Activated CD8-positive, alpha-beta T cell treated with anti-CD3 and anti-CD28 coated beads, Interleukin-2, amount 10 ng/mL, durations not matched to agents 7 days and 5 days (primary cell): ENCODE measurements at regions of chr22 and their contacts with region 1.

Region 1: GRCh38 chr22:31080848-31081649 is at the start of gene SMTN:
- DNase-seq: peak; percentile 93
- ATAC-seq: peak; percentile 77
- H3K4me3 Mint-ChIP-seq: peak within 1 kb of the TSS; percentile 88
- H3K27ac Mint-ChIP-seq: peak within 1 kb of the TSS; percentile 86
- H3K4me1 Mint-ChIP-seq: peaks cover 37% of the 10 kb centered on the region
- H3K27me3 Mint-ChIP-seq: no peaks in the 10 kb centered on the region
- total RNA-seq, gene SMTN: 51.0 to 61.7 TPM

Region 2: DNA sequence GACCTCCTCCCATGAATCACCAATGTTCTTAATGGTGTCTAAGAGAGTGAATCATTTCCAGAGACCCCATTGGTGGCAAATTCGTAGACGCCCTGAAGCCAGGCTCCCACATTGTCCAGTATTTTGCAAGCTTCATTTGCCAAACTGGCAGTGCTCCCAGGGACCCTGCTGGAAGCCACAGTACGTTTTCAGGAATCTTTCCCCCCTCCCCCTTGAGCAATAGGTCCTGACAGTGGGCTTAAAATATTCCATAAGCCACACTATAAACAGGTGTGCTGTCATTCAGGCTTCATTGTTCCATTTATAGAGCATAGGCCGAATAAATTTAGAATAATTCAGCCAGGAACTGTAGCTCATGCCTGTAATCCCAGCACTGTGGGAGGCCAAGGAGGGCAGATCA is 237.8 kb before region 1 on chr22:
- CTCF ChIA-PET with region 1: no interaction called
- POLR2A ChIA-PET with region 1: no interaction called
- DNase-seq: no peak
- ATAC-seq: no peak
- H3K4me3 Mint-ChIP-seq: no peak overlapping the region
- H3K27ac Mint-ChIP-seq: no peak overlapping the region
- H3K4me1 Mint-ChIP-seq: no peaks in the 10 kb centered on the region
- H3K27me3 Mint-ChIP-seq: peaks cover 3% of the 10 kb centered on the region

Region 3: GRCh38 chr22:30920407-30920806 is 160.6 kb before region 1 on chr22:
- CTCF ChIA-PET with region 1: interaction called, 16 read pairs
- POLR2A ChIA-PET with region 1: interaction called, 4 read pairs
- DNase-seq: peak; percentile 88
- ATAC-seq: peak; percentile 85
- H3K4me3 Mint-ChIP-seq: peak overlapping the region; percentile 44
- H3K27ac Mint-ChIP-seq: no peak overlapping the region
- H3K4me1 Mint-ChIP-seq: peaks cover 17% of the 10 kb centered on the region
- H3K27me3 Mint-ChIP-seq: no peaks in the 10 kb centered on the region

Region 4: DNA sequence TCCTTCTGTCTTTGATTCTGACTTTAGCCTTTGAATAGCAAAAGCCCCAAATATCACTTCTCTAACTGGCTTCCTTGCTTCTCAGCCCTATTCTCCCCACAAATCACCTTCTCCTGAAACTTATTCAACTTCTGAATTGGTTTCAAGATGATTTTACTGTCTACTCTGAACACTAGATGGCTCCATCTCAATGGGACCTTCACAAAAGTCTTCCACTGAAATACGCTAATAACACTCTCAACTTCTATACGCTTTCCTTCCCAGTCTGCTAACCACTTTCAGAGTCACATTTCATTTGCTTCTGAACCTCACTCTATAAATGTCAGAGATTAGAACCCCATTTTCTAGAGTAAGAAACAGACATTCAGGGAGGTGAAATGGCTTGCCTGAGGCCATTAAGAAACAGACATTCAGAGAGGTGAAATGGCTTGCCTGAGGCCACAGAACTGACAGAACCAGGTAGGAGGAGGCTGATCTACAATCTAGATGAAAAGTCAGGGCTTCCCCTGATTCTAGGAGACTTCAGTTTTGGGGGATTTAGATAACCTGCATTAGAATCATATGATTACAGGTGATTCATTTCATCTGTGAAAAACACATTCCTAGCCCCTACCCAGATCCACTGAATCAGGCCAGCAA is 133.1 kb before region 1 on chr22:
- CTCF ChIA-PET with region 1: interaction called, 37 read pairs
- POLR2A ChIA-PET with region 1: interaction called, 3 read pairs
- DNase-seq: no peak
- ATAC-seq: no peak
- H3K4me3 Mint-ChIP-seq: no peak overlapping the region
- H3K27ac Mint-ChIP-seq: no peak overlapping the region
- H3K4me1 Mint-ChIP-seq: peaks cover 55% of the 10 kb centered on the region
- H3K27me3 Mint-ChIP-seq: no peaks in the 10 kb centered on the region

Region 5: DNA sequence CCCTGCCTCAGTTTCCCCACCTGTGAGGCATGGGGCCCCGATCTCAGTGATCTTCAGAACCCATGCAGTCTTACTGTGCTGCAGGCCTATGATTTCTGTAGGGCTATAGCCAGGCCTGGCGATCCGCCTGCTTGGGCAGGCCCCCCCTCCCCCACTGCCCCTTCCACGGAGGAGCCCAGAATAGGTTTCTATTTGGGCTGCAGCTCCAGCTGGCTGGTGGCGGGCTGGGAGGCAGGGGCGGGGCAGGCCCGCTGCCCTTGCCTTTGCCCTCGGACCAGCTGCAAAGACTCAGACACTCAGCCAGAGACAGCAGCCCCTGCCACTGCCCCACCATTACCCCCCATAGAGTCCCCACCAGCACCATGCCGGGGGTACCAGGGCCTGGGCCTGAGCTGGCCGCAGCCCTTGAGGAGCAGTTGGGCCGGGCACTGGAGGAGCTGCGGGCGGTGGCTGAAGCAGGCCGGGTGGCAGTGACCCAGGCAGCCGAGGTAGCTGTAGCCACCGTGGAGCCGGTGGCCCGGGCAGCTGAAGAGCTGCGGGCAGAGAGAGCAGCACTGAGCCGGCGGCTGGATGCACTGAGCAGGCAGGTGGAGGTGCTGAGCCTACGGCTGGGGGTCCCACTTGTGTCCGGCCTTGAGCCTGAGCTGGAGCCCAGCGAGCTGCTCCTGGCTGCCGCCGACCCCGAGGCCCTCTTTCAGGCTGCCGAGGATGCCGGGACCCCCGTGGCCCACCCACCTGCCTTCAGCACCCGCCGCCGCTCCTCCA is 12.2 kb after region 1 on chr22:
- CTCF ChIA-PET with region 1: interaction called, 10 read pairs
- POLR2A ChIA-PET with region 1: interaction called, 5 read pairs
- DNase-seq: no peak
- ATAC-seq: no peak
- H3K4me3 Mint-ChIP-seq: no peak overlapping the region
- H3K27ac Mint-ChIP-seq: no peak overlapping the region
- H3K4me1 Mint-ChIP-seq: no peaks in the 10 kb centered on the region
- H3K27me3 Mint-ChIP-seq: no peaks in the 10 kb centered on the region